ENCODE measurements at regions of chr5 and their contacts with region 1.

Region 1: DNA sequence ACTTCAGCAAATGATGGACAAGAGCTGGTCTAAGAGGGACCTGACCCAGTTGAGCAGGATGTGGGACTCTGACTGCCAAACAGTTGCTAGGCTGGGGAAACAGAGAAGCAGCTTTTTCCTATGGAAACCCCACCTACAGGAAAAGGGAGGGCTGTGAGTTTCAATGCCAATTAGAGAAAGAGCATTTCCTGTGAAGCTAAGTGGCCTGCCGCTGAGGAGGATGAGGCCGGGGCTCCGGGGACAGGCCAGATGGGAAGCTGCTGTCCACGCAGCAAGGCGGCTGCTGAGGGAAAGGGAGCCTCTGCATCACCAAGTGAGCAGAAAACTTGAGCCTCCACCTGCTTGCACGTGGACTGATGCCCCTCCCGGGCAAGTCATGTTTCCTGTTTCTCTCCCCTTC is at the start of gene PCDH12:
- DNase-seq: peak in 1 of 2 donors; percentile 49
- H3K4me3 ChIP-seq: no peak within 1 kb of the TSS
- H3K27ac ChIP-seq: peak within 1 kb of the TSS in 1 of 2 donors; percentile 43
- H3K4me1 ChIP-seq: no peaks in the 10 kb centered on the region
- H3K27me3 ChIP-seq: no peaks in the 10 kb centered on the region
- CTCF ChIP-seq: no peak
- POLR2A ChIP-seq: no peak
- total RNA-seq, gene PCDH12: 1.3 to 43.6 (median 3.6) TPM

Region 2: DNA sequence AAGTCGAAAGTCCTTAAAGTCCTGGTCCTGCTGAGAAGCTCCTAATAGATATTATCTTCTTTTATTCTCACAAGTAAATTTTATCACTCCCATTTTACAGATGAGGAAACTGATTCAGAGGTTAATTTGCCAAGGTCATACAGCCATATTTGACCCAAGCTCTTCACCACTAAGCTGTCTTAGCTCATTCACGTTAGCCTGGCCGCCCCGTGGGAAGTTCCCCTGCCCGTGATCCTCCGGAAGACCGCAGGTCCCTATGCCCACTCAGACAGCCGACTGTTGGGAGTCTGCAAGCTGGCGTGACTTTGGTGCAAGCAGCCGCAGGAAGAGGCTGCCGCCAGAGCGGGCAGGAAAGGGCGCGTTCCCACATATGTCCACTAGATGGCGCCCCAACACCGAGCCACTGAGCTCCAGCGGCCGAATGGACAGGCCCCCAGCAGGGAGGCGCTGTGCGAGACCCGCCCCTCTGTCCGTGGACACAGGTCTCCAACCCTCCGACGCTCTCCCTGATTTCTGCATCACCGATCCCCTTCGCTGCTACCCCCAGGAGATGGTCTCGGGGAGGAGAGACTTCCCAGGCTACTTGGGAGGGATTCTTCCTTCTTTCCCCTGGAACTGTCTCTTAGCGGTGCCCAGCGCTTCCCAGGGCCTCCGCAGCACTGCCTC is 266.1 kb before region 1 on chr5:
- intact Hi-C with region 1: loop called (anchors 5 kb)
- DNase-seq: peak; percentile 74 to 88
- H3K4me3 ChIP-seq: no peak overlapping the region
- H3K27ac ChIP-seq: no peak overlapping the region
- H3K4me1 ChIP-seq: no peaks in the 10 kb centered on the region
- H3K27me3 ChIP-seq: no peaks in the 10 kb centered on the region
- CTCF ChIP-seq: peak; percentile 97 to 99 (median 98)
- POLR2A ChIP-seq: no peak

Region 3: DNA sequence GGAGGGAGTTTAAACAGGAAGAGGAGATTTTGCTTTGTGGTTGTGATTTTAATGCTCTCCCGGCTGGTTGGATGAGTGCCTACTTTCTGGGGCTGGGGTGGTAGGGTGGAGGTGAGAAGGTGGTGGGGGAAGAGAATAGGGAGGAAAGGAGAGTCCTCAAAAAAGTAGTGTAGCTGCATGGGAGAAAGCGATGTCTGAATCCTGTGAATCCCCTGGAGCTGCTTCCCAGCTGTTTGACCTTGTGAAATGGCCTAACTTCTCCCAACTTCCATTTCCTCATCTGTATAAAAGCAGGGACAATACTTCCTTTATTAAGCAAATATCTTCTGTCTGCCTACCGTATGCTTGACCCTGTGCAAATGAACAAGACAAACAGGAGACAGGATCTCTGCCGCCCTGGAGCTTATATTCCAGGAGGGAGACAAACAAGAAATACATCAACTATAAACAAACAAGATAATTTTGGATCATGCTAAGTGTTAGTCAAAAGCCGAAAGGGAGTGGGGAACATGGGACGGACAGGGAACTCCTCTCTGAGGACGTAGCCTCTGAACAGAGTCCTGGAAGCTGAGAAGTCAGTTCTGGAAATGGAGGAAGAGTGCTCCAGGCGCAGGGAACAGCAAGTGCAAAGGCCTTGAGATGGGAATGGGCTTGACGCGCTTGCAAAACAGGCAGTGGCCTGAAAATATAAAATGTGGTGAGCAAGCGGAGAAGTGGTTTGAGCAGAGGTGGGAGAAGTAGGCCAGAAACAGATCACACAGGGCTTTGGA is 263.2 kb after region 1 on chr5:
- intact Hi-C with region 1: no loop called
- DNase-seq: no peak
- H3K4me3 ChIP-seq: no peak overlapping the region
- H3K27ac ChIP-seq: no peak overlapping the region
- H3K4me1 ChIP-seq: peaks cover 0 to 4% of the 10 kb centered on the region in 2 donors
- H3K27me3 ChIP-seq: no peaks in the 10 kb centered on the region
- CTCF ChIP-seq: no peak
- POLR2A ChIP-seq: no peak